Transverse colon (tissue), 4 donors: ENCODE measurements at regions of chr16 and their contacts with region 1.

Region 1: GRCh38 chr16:79217375-79218011 is 383.0 kb downstream of the MAF start:
- DNase-seq: no peak
- H3K4me3 ChIP-seq: no peak overlapping the region
- H3K27ac ChIP-seq: no peak overlapping the region
- H3K4me1 ChIP-seq: peaks cover 0 to 11% (median 7%) of the 10 kb centered on the region in 4 donors
- H3K27me3 ChIP-seq: no peaks in the 10 kb centered on the region
- CTCF ChIP-seq: no peak
- EP300 ChIP-seq: no peak
- POLR2A ChIP-seq: no peak

Region 2: GRCh38 chr16:78786661-78787060 is 430.8 kb before region 1 on chr16:
- in situ Hi-C with region 1: no loop called
- intact Hi-C with region 1: loop called (anchors 5 kb)
- DNase-seq: no peak
- H3K4me3 ChIP-seq: no peak overlapping the region
- H3K27ac ChIP-seq: no peak overlapping the region
- H3K4me1 ChIP-seq: no peaks in the 10 kb centered on the region
- H3K27me3 ChIP-seq: no peaks in the 10 kb centered on the region
- CTCF ChIP-seq: no peak
- EP300 ChIP-seq: no peak
- POLR2A ChIP-seq: no peak

Region 3: GRCh38 chr16:79437764-79438751 is 220.6 kb after region 1 on chr16:
- in situ Hi-C with region 1: no loop called
- intact Hi-C with region 1: no loop called
- DNase-seq: no peak
- H3K4me3 ChIP-seq: no peak overlapping the region
- H3K27ac ChIP-seq: no peak overlapping the region
- H3K4me1 ChIP-seq: no peaks in the 10 kb centered on the region
- H3K27me3 ChIP-seq: no peaks in the 10 kb centered on the region
- CTCF ChIP-seq: no peak
- EP300 ChIP-seq: no peak
- POLR2A ChIP-seq: no peak